Prostate gland (tissue), 2 donors: ENCODE measurements at regions of chr5 and their contacts with region 1.

Region 1: DNA sequence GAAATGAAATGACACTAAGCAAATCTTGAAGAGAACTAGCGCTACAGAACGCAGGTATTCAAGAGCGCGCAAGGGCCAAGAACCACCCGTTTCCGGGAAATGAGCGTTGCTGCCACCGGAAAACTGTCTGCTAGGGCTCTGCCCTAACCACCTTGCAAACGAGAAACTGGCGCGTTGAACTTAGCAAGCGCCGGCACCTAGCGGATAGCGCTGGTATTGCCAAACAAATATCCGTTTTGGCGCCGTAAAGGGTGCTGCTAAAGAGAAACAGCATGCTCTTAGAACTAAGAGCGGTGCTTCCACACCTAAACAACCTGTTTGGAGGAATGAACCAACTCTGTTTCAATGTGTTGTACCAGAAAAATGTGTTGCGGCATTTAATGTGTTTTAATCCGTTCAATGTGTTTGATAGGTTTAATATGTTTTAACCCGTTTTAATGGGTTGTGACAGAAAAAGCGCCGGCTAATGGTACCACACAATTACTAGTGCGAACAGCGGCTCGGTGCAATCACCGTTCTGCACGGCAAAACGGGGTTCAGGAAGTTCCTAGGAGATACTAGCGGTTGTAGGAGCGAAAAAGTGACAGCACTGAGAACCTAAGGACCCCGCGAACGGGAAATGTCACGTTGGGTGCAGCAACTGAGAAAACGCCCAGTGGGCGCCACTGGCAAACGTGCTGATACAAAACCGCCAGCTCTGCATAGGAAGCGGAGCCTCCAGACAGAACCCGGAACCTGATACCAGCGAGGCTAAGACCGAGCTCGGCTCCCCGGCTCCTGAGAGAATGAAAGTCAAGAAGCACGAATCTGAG is at the start of gene ANXA2R:
- DNase-seq: peak; percentile 94
- H3K4me3 ChIP-seq: peak within 1 kb of the TSS; percentile 49 to 51
- H3K27ac ChIP-seq: peak within 1 kb of the TSS; percentile 94 to 98
- H3K4me1 ChIP-seq: no peaks in the 10 kb centered on the region
- H3K27me3 ChIP-seq: no peaks in the 10 kb centered on the region
- CTCF ChIP-seq: peak; percentile 84 to 92 (median 84)
- POLR2A ChIP-seq: no peak
- total RNA-seq, gene ANXA2R: 4.5 to 5.3 TPM

Region 2: GRCh38 chr5:42547141-42547540 is 493.4 kb before region 1 on chr5:
- intact Hi-C with region 1: no loop called
- DNase-seq: no peak
- H3K4me3 ChIP-seq: no peak overlapping the region
- H3K27ac ChIP-seq: no peak overlapping the region
- H3K4me1 ChIP-seq: no peaks in the 10 kb centered on the region
- H3K27me3 ChIP-seq: no peaks in the 10 kb centered on the region
- CTCF ChIP-seq: no peak
- POLR2A ChIP-seq: no peak

Region 3: DNA sequence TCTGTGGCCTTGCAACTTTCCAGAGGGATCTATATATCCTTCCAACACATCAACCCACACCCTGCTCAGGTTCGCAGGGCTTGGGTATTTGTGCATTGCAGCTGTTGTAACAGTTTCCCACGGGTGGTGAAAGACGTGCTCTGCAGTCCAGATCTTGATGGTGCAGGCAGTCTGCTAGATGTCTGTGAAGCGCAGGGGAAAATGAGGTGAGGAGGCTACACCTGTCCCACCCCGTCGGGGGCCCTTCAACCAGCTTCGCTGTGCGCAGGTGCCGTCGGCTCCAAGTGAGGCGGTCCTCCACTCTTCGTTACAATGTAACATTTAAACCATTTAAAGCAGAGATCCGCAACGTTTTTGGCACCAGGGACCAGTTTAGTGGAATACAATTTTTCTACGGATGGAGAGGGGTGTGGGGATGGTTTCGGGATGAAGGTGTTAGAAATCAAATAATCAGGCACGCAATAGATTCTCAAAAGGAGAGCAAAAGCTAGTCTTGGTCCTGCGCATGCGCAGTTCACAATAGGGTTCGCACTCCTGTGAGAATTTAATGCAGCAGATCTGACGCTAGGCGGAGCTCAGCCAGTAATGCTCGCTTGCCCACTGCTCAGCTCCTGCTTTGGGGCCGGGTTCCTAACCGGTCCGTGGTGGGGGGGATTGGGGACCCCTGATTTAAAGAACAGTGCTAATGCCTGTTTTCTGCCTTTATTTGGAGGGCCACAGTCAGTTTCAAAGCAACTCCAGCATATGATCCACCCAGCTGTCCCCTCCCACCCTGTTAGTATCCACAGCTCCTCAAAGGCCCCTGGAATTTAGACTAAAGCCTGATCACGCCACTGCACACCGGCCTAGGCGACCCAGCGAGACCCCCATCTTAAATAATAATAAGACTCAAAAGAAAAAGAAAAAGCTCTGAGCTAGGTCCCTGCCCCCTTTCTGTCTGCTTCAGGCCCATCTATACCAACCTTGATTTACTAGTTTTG is 131.7 kb before region 1 on chr5:
- intact Hi-C with region 1: loop called (anchors 5 kb)
- DNase-seq: peak; percentile 90
- H3K4me3 ChIP-seq: peak overlapping the region; percentile 19 to 32
- H3K27ac ChIP-seq: no peak overlapping the region
- H3K4me1 ChIP-seq: no peaks in the 10 kb centered on the region
- H3K27me3 ChIP-seq: no peaks in the 10 kb centered on the region
- CTCF ChIP-seq: peak; percentile 28 to 90 (median 82)
- POLR2A ChIP-seq: no peak

Region 4: DNA sequence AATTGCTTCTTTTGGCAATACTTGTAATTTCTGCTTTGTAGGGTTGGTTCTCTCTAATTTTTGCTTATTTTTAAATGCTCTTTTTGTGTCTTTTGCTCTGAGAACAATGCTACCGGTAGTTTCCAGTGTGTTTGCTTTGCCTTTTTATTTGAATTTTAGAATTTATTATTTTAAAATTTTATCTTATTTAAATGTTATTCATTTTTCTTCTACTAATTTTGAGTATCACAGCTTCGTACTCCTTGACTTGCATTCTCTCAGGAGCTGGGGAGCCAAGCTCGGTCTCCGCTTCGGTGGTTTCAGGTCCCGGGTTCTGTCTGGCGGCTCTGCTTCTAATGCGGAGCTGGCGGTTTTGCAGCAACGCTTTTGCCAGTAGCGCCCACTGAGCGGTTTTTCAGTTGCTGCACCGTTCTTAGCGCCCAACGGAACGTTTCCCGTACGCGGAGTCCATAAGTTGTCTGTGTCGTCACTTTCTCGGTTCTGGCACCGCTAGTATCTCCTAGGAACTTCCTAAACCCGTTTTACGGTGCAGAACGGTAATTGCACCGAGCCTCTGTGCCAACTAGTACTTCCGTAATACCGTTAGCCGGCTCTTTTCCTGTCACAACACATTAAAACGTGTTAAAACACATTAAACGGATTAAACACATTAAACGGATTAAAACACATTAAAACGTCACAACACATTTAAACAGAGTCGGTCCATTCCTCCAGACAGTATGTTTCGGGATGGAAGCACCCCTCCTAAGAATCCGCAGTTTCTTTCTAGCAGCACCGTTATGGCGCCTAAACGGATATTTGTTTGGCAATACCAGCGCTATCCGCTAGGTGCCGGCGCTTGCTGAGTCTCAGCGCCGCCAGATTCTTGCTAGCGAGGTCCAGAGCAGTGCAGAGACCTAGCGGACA is 46.0 kb before region 1 on chr5:
- intact Hi-C with region 1: loop called (anchors 5 kb)
- DNase-seq: peak; percentile 74
- H3K4me3 ChIP-seq: peak overlapping the region; percentile 20 to 26
- H3K27ac ChIP-seq: peak overlapping the region; percentile 17 to 90
- H3K4me1 ChIP-seq: no peaks in the 10 kb centered on the region
- H3K27me3 ChIP-seq: no peaks in the 10 kb centered on the region
- CTCF ChIP-seq: peak; percentile 47 to 81 (median 64)
- POLR2A ChIP-seq: no peak

Region 5: DNA sequence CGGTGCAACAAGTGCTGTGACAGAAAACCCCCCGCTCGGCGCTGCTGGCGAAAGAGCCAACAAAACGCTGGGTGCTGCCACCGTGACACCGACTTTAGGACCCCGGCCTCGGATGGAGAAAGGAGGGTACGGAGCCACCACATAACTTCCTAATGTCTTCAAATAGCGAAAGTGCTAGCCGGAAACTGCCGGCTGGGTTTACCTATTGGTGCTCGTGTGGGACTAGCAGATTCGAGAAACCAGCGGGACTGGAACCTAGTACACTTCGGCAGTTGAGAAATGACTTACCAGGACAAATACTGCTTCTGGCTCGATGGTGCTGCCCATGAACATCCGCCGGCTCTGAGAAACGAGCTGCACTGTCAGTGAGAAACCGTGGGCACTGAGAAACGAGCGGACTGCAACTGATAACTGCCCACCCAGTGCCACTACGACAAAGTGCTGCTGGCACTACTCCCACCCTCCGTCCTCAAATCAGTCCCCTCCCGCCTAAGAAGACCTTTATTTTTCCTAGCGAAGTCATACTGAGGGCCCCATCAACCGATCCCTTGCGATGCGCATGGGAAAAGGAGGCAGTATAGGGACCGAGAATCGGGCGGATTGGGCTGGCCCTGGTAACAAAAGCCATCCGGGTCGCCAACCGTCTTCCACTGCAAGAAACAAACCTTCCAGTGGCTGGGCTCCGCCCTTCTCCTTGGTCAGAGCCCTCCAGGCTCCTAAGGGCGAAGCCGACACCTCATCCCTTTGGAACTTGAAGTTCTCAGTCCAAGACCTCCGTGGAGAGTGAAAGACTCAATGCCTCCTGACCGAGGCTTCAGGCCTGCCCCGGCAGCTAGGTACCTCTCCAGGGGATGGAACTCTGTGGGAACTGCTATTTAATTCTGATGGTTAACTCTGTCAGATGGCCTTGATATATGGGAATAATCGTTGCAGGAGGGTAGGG is 26.6 kb after region 1 on chr5:
- intact Hi-C with region 1: loop called (anchors 1 kb)
- DNase-seq: peak; percentile 92
- H3K4me3 ChIP-seq: peak overlapping the region; percentile 62 to 77
- H3K27ac ChIP-seq: peak overlapping the region; percentile 98 to 99
- H3K4me1 ChIP-seq: peaks cover 5% of the 10 kb centered on the region
- H3K27me3 ChIP-seq: no peaks in the 10 kb centered on the region
- CTCF ChIP-seq: peak in 1 of 4 experiments; percentile 12
- POLR2A ChIP-seq: peak; percentile 60

Region 6: GRCh38 chr5:43120720-43121564 is 80.4 kb after region 1 on chr5 and contains the start of gene ZNF131:
- intact Hi-C with region 1: loop called (anchors 5 kb)
- DNase-seq: peak; percentile 95
- H3K4me3 ChIP-seq: peak within 1 kb of the TSS; percentile 73 to 93
- H3K27ac ChIP-seq: peak within 1 kb of the TSS; percentile 99 to 100
- H3K4me1 ChIP-seq: no peaks in the 10 kb centered on the region
- H3K27me3 ChIP-seq: no peaks in the 10 kb centered on the region
- CTCF ChIP-seq: peak in 2 of 4 experiments; percentile 9 to 29
- POLR2A ChIP-seq: peak; percentile 68
- total RNA-seq, gene ZNF131: 33.9 to 40.3 TPM